Activated CD4-positive, alpha-beta memory T cell treated with anti-CD3 and anti-CD28 coated beads for 36 hours (primary cell): ENCODE measurements at regions of chr2 and their contacts with region 1.

Region 1: DNA sequence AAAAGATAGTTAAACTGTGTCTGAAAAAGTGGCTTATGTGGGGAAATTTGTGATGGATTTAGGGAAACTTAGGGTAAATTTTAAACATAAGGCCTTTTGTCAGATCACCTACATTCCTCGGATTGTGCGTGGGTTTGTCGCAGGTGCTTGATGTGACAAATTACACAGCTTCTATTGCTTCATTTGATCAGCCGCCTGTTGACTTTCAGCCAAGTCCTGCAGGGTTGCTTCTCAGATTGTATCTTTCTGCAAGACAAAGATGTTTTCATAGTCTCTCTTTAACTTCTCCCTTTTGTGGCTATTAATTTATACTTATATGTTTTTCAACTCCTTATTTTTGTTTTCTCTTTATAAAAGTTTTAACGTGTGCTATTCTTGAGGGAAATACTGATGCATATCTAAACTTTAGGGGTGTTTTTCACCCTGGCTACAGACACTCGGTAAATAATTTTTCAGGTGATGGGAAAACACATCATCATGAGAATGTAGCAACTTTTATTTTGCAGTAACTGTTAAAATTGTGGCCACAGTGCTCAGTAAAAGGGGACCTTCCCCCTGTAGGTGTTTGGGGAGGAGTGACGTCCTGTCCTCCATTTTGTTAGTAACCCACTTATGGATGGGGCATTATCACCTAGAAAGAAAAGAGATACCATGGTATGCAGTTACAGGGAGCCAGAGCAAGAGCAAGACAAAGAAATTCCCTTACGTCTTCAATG is 31.4 kb downstream of the GALM start:
- DNase-seq: peak; percentile 71
- H3K4me3 Mint-ChIP-seq: peak overlapping the region; percentile 34
- H3K27ac Mint-ChIP-seq: peak overlapping the region; percentile 94
- H3K4me1 Mint-ChIP-seq: peaks cover 86% of the 10 kb centered on the region
- H3K27me3 Mint-ChIP-seq: no peaks in the 10 kb centered on the region

Region 2: GRCh38 chr2:38508311-38509039 is 188.8 kb before region 1 on chr2:
- CTCF ChIA-PET with region 1: no interaction called
- POLR2A ChIA-PET with region 1: no interaction called
- intact Hi-C with region 1: no loop called
- DNase-seq: peak; percentile 89
- H3K4me3 Mint-ChIP-seq: no peak overlapping the region
- H3K27ac Mint-ChIP-seq: no peak overlapping the region
- H3K4me1 Mint-ChIP-seq: no peaks in the 10 kb centered on the region
- H3K27me3 Mint-ChIP-seq: peaks cover 2% of the 10 kb centered on the region

Region 3: DNA sequence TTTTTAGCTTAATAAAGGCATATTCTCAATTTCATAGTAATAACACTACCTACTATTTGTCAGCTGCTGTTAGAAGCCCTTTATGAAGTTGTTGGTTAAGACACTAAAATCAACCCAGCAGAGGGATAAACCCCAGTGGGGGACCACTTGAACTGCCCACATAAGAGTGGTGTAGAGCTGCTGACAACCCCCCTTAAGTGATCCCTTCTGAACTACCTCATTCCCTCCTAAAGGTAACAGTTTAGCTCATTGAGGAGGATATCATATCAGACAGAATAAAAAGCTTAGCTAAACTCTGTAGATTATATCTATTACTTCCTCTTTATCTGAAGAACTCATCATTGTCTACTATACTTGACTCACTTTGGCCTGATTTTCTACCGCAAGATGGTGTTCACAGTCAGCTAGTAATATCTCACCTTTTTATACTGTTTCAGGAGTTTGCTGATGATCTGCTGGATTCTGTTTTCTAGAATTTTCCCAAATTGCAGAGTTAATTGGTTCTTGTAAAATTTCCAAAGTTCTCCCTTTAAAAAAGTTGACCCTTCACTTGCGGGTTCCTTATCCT is 15.2 kb before region 1 on chr2:
- CTCF ChIA-PET with region 1: interaction called, 5 read pairs
- POLR2A ChIA-PET with region 1: interaction called, 17 read pairs
- intact Hi-C with region 1: loop called (anchors 2 kb)
- DNase-seq: peak; percentile 38
- H3K4me3 Mint-ChIP-seq: peak overlapping the region; percentile 63
- H3K27ac Mint-ChIP-seq: peak overlapping the region; percentile 84
- H3K4me1 Mint-ChIP-seq: peaks cover 78% of the 10 kb centered on the region
- H3K27me3 Mint-ChIP-seq: no peaks in the 10 kb centered on the region

Region 4: GRCh38 chr2:38709567-38710194 is 12.4 kb after region 1 on chr2:
- CTCF ChIA-PET with region 1: no interaction called
- POLR2A ChIA-PET with region 1: interaction called, 4 read pairs
- intact Hi-C with region 1: loop called (anchors 1 kb)
- DNase-seq: peak; percentile 72
- H3K4me3 Mint-ChIP-seq: peak overlapping the region; percentile 52
- H3K27ac Mint-ChIP-seq: peak overlapping the region; percentile 90
- H3K4me1 Mint-ChIP-seq: peaks cover 74% of the 10 kb centered on the region
- H3K27me3 Mint-ChIP-seq: no peaks in the 10 kb centered on the region

Region 5: GRCh38 chr2:38806015-38806732 is 108.9 kb after region 1 on chr2:
- CTCF ChIA-PET with region 1: no interaction called
- POLR2A ChIA-PET with region 1: no interaction called
- intact Hi-C with region 1: no loop called
- DNase-seq: no peak
- H3K4me3 Mint-ChIP-seq: no peak overlapping the region
- H3K27ac Mint-ChIP-seq: no peak overlapping the region
- H3K4me1 Mint-ChIP-seq: no peaks in the 10 kb centered on the region
- H3K27me3 Mint-ChIP-seq: no peaks in the 10 kb centered on the region